CD8-positive, alpha-beta memory T cell (primary cell): ENCODE measurements at regions of chr4 and their contacts with region 1.

Region 1: GRCh38 chr4:77082886-77083608 is 7.3 kb upstream of the CCNI start:
- DNase-seq: no peak
- H3K4me3 ChIP-seq: no peak overlapping the region
- H3K4me3 Mint-ChIP-seq: no peak overlapping the region
- H3K27ac ChIP-seq: no peak overlapping the region
- H3K27ac Mint-ChIP-seq: no peak overlapping the region
- H3K4me1 ChIP-seq: peaks cover 9% of the 10 kb centered on the region
- H3K4me1 Mint-ChIP-seq: peaks cover 12 to 17% (median 17%) of the 10 kb centered on the region in 3 donors
- H3K27me3 ChIP-seq: no peaks in the 10 kb centered on the region
- H3K27me3 Mint-ChIP-seq: no peaks in the 10 kb centered on the region

Region 2: GRCh38 chr4:77095101-77095821 is 12.2 kb after region 1 on chr4:
- CTCF ChIA-PET with region 1: interaction called, 12 read pairs
- POLR2A ChIA-PET with region 1: no interaction called
- DNase-seq: peak; percentile 33 to 78 (median 56)
- H3K4me3 ChIP-seq: no peak overlapping the region
- H3K4me3 Mint-ChIP-seq: no peak overlapping the region
- H3K27ac ChIP-seq: no peak overlapping the region
- H3K27ac Mint-ChIP-seq: peak overlapping the region in 1 of 8 donors; percentile 7
- H3K4me1 ChIP-seq: peaks cover 2% of the 10 kb centered on the region
- H3K4me1 Mint-ChIP-seq: peaks cover 7 to 11% (median 9%) of the 10 kb centered on the region in 3 donors
- H3K27me3 ChIP-seq: no peaks in the 10 kb centered on the region
- H3K27me3 Mint-ChIP-seq: no peaks in the 10 kb centered on the region

Region 3: DNA sequence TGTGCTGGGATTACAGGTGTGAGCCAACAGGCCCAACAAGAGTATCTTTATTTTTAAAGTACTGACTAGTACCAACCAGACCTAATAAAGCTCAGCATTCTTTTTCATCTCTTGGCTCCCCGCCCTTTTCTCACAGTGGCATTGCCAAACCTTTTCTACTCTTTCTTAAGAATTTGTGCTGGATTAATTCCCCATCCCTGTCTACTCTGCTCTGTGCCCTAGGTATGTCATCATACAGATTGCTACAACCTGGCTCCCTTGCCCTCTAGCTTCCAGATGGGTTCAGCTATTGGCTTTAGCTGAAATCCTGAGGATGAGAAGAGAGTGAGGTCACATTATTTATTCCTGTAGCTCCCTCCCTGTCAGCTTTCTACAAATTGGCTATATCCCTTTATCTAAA is 27.7 kb after region 1 on chr4:
- CTCF ChIA-PET with region 1: no interaction called
- POLR2A ChIA-PET with region 1: no interaction called
- DNase-seq: no peak
- H3K4me3 ChIP-seq: no peak overlapping the region
- H3K4me3 Mint-ChIP-seq: no peak overlapping the region
- H3K27ac ChIP-seq: no peak overlapping the region
- H3K27ac Mint-ChIP-seq: no peak overlapping the region
- H3K4me1 ChIP-seq: no peaks in the 10 kb centered on the region
- H3K4me1 Mint-ChIP-seq: no peaks in the 10 kb centered on the region
- H3K27me3 ChIP-seq: no peaks in the 10 kb centered on the region
- H3K27me3 Mint-ChIP-seq: peaks cover 14 to 41% of the 10 kb centered on the region in 2 donors